IMR-90 (cell line): ENCODE measurements at regions of chr5 and their contacts with region 1.

Region 1: DNA sequence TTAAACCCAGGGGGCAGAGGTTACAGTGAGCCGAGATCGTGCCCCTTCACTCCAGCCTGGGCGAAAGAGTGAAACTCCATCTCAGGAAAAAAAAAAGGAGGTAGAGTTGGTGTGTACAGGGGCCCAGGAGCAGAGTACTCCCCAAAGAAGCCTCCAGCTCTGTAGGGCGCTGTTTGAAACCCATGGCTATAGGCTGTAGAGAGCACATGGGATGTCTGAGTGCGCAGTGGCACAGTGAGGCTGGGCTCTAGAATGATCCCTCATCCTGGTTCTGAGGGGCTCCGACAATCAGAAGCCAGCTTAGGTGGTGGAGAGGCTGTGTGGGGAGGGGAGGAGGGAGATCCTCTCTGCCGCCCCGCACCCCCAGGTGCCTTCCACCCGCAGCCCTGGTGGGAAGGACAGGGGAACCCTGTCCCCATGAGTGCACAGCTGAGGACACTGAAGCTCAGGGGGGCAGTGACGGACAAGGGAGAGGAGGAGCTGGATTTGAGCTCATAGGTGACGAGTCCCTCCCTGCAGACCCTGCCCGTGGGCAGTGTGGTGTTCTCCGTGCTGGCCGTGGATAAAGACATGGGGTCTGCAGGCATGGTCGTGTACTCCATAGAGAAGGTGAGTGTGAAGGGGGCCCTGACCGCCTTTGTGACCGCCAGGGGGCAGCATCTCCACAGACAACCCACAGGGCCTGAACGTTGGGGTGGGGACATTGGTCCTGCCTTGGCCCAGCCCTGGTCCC is 24.6 kb downstream of the CDHR2 start:
- DNase-seq: peak; percentile 32
- ATAC-seq: peak; percentile 95
- H3K4me3 ChIP-seq: no peak overlapping the region
- H3K27ac ChIP-seq: no peak overlapping the region
- H3K4me1 ChIP-seq: no peaks in the 10 kb centered on the region
- H3K27me3 ChIP-seq: peaks cover 5% of the 10 kb centered on the region; the same call in 1 of the 2 replicates
- CTCF ChIP-seq: peak; percentile 82
- POLR2A ChIP-seq: no peak
- RAD21 ChIP-seq: peak; percentile 86

Region 2: GRCh38 chr5:176415952-176416924 is 157.5 kb before region 1 on chr5 and contains the start of gene CLTB:
- CTCF ChIA-PET with region 1: interaction called, 7 read pairs
- POLR2A ChIA-PET with region 1: no interaction called
- dilution Hi-C with region 1: no loop called
- in situ Hi-C with region 1: no loop called
- intact Hi-C with region 1: loop called (anchors 1 kb)
- DNase-seq: peak; percentile 78
- ATAC-seq: peak; percentile 92
- H3K4me3 ChIP-seq: peak within 1 kb of the TSS; percentile 73
- H3K27ac ChIP-seq: peak within 1 kb of the TSS; percentile 54
- H3K4me1 ChIP-seq: peaks cover 11% of the 10 kb centered on the region
- H3K27me3 ChIP-seq: peaks cover 3% of the 10 kb centered on the region; the same call in 1 of the 2 replicates
- CTCF ChIP-seq: peak; percentile 99
- POLR2A ChIP-seq: peak; percentile 72
- RAD21 ChIP-seq: peak; percentile 96
- total RNA-seq, gene CLTB: 87.6 and 122 TPM in 2 replicates

Region 3: GRCh38 chr5:176619203-176619568 is 45.5 kb after region 1 on chr5:
- CTCF ChIA-PET with region 1: interaction called, 7 read pairs
- POLR2A ChIA-PET with region 1: no interaction called
- dilution Hi-C with region 1: no loop called
- in situ Hi-C with region 1: loop called (anchors 10 kb)
- intact Hi-C with region 1: loop called (anchors 1 kb)
- DNase-seq: peak; percentile 86
- ATAC-seq: peak; percentile 95
- H3K4me3 ChIP-seq: no peak overlapping the region
- H3K27ac ChIP-seq: no peak overlapping the region
- H3K4me1 ChIP-seq: peaks cover 27% of the 10 kb centered on the region
- H3K27me3 ChIP-seq: peaks cover 32% of the 10 kb centered on the region
- CTCF ChIP-seq: peak; percentile 72
- POLR2A ChIP-seq: no peak
- RAD21 ChIP-seq: peak; percentile 80

Region 4: DNA sequence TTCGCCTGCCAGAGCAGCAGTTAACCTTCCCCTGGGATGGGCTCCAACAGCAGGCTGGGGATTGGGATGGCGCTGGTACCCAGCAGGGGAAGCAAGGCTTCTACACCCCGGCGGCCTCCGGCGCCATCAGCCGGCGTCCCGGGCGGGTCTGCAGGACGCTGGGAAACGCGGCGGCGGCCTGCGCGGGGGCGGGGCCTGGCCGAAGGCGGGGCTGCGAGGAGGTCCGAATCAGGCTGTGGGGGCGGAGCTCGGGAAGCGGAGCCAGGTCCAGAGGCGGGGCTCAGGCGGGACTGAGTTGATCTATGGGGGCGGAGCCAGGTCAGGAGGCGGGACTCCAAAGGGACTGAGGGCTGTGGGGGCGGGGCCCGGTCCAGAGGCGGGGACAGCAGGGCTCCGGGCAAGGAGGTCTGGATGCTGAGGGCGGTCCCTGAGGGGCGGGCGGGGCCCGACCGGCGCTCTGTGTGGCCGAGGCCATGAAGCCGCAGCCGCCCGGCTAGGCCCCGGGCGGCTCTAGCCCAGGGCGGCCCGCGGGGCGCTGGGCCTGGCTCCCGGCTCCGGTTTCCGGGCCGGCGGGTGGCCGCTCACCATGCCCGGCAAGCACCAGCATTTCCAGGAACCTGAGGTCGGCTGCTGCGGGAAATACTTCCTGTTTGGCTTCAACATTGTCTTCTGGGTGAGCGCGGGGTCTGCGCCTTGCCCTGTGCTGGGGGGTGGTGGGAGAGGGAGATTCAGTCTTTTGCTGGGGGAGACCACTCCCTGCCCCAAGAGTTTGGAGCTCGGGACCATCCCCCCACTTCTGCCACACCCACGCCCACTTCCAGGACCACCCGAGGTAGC is 73.5 kb after region 1 on chr5 and contains the start of gene TSPAN17:
- CTCF ChIA-PET with region 1: interaction called, 7 read pairs
- POLR2A ChIA-PET with region 1: no interaction called
- dilution Hi-C with region 1: no loop called
- in situ Hi-C with region 1: no loop called
- intact Hi-C with region 1: loop called (anchors 1 kb)
- DNase-seq: peak; percentile 98
- ATAC-seq: peak; percentile 99
- H3K4me3 ChIP-seq: peak within 1 kb of the TSS; percentile 76
- H3K27ac ChIP-seq: peak within 1 kb of the TSS; percentile 51
- H3K4me1 ChIP-seq: peaks cover 10% of the 10 kb centered on the region; the same call in 1 of the 2 replicates
- H3K27me3 ChIP-seq: no peaks in the 10 kb centered on the region; the same call in 1 of the 2 replicates
- CTCF ChIP-seq: peak; percentile 64
- POLR2A ChIP-seq: peak; percentile 86
- RAD21 ChIP-seq: peak; percentile 70
- total RNA-seq, gene TSPAN17: 34.2 and 35.3 TPM in 2 replicates